ENCODE measurements at regions of chrX and their contacts with region 1.

Region 1: GRCh38 chrX:139965391-139965790 is at the start of gene CXorf66:
- H3K4me3 ChIP-seq: no peak within 1 kb of the TSS
- H3K27ac ChIP-seq: no peak within 1 kb of the TSS
- H3K4me1 ChIP-seq: no peaks in the 10 kb centered on the region
- CTCF ChIP-seq: no peak

Region 2: GRCh38 chrX:139862217-139862616 is 103.2 kb before region 1 on chrX:
- CTCF ChIA-PET with region 1: no interaction called
- POLR2A ChIA-PET with region 1: no interaction called
- H3K4me3 ChIP-seq: no peak overlapping the region
- H3K27ac ChIP-seq: no peak overlapping the region
- H3K4me1 ChIP-seq: no peaks in the 10 kb centered on the region
- CTCF ChIP-seq: no peak

Region 3: GRCh38 chrX:139945075-139945474 is 20.3 kb before region 1 on chrX:
- CTCF ChIA-PET with region 1: interaction called, 13 read pairs
- POLR2A ChIA-PET with region 1: no interaction called
- H3K4me3 ChIP-seq: no peak overlapping the region
- H3K27ac ChIP-seq: no peak overlapping the region
- H3K4me1 ChIP-seq: no peaks in the 10 kb centered on the region
- CTCF ChIP-seq: no peak

Measured in HEK293 (cell line).